CD4-positive, alpha-beta memory T cell (primary cell): ENCODE measurements at regions of chr19 and their contacts with region 1.

Region 1: GRCh38 chr19:1490311-1491113 is at the start of gene PCSK4:
- DNase-seq: peak; percentile 97 to 100 (median 98)
- H3K4me3 ChIP-seq: peak within 1 kb of the TSS; percentile 34 to 58
- H3K4me3 Mint-ChIP-seq: peak within 1 kb of the TSS; percentile 86 to 95 (median 90)
- H3K27ac ChIP-seq: peak within 1 kb of the TSS; percentile 51
- H3K27ac Mint-ChIP-seq: peak within 1 kb of the TSS; percentile 88 to 96 (median 93)
- H3K4me1 ChIP-seq: peaks cover 15% of the 10 kb centered on the region
- H3K4me1 Mint-ChIP-seq: peaks cover 3 to 18% (median 10%) of the 10 kb centered on the region in 4 donors
- H3K27me3 ChIP-seq: no peaks in the 10 kb centered on the region
- H3K27me3 Mint-ChIP-seq: peaks cover 0 to 3% of the 10 kb centered on the region in 2 donors
- total RNA-seq, gene PCSK4: 3.1 to 3.7 TPM

Region 2: DNA sequence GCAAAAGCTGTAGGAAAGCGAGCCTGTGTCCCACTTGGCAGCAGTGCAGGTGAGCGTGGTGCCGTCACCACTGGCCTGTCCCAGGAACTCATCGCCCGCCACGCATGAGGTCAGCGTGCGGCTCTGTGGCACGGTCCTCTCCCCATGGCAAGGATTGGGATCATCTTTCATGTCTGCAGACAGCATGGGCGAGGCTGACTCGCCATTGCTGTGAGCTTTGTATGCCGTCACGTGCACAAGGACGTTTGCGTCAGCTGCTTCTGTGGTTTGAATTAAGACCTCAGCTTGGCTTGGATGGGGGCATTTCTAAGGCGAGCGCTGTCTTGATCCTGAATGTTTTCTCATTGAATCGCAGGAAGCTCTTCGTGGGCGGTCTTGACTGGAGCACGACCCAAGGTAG is 73.4 kb before region 1 on chr19:
- CTCF ChIA-PET with region 1: no interaction called
- POLR2A ChIA-PET with region 1: no interaction called
- intact Hi-C with region 1: no loop called
- DNase-seq: no peak
- H3K4me3 ChIP-seq: no peak overlapping the region
- H3K4me3 Mint-ChIP-seq: no peak overlapping the region
- H3K27ac ChIP-seq: no peak overlapping the region
- H3K27ac Mint-ChIP-seq: peak overlapping the region in 3 of 7 donors; percentile 4 to 59 (median 51)
- H3K4me1 ChIP-seq: peaks cover 51% of the 10 kb centered on the region
- H3K4me1 Mint-ChIP-seq: peaks cover 23 to 54% (median 43%) of the 10 kb centered on the region in 4 donors
- H3K27me3 ChIP-seq: no peaks in the 10 kb centered on the region
- H3K27me3 Mint-ChIP-seq: no peaks in the 10 kb centered on the region

Region 3: GRCh38 chr19:1445185-1445931 is 45.2 kb before region 1 on chr19:
- CTCF ChIA-PET with region 1: interaction called, 3 read pairs
- POLR2A ChIA-PET with region 1: interaction called, 4 read pairs
- intact Hi-C with region 1: loop called (anchors 1 kb)
- DNase-seq: peak; percentile 68 to 82 (median 74)
- H3K4me3 ChIP-seq: peak overlapping the region in 1 of 2 donors; percentile 57
- H3K4me3 Mint-ChIP-seq: peak overlapping the region; percentile 53 to 82 (median 70)
- H3K27ac ChIP-seq: peak overlapping the region; percentile 22
- H3K27ac Mint-ChIP-seq: peak overlapping the region in 4 of 7 donors; percentile 25 to 99 (median 54)
- H3K4me1 ChIP-seq: peaks cover 40% of the 10 kb centered on the region
- H3K4me1 Mint-ChIP-seq: peaks cover 4 to 47% (median 16%) of the 10 kb centered on the region in 4 donors
- H3K27me3 ChIP-seq: peaks cover 27% of the 10 kb centered on the region
- H3K27me3 Mint-ChIP-seq: peaks cover 17 to 20% of the 10 kb centered on the region in 2 donors

Region 4: GRCh38 chr19:1470203-1471009 is 20.1 kb before region 1 on chr19:
- CTCF ChIA-PET with region 1: interaction called, 4 read pairs
- POLR2A ChIA-PET with region 1: interaction called, 12 read pairs
- intact Hi-C with region 1: no loop called
- DNase-seq: peak; percentile 66 to 80 (median 70)
- H3K4me3 ChIP-seq: peak overlapping the region; percentile 57 to 58
- H3K4me3 Mint-ChIP-seq: peak overlapping the region; percentile 67 to 83 (median 77)
- H3K27ac ChIP-seq: no peak overlapping the region
- H3K27ac Mint-ChIP-seq: peak overlapping the region in 1 of 7 donors; percentile 58
- H3K4me1 ChIP-seq: peaks cover 54% of the 10 kb centered on the region
- H3K4me1 Mint-ChIP-seq: peaks cover 3 to 21% (median 8%) of the 10 kb centered on the region in 4 donors
- H3K27me3 ChIP-seq: no peaks in the 10 kb centered on the region
- H3K27me3 Mint-ChIP-seq: peaks cover 0 to 1% of the 10 kb centered on the region in 2 donors

Region 5: GRCh38 chr19:1478934-1479707 is 11.4 kb before region 1 on chr19 and contains the start of gene C19orf25:
- CTCF ChIA-PET with region 1: interaction called, 4 read pairs
- POLR2A ChIA-PET with region 1: interaction called, 9 read pairs
- intact Hi-C with region 1: loop called (anchors 1 kb)
- DNase-seq: peak; percentile 87 to 91 (median 89)
- H3K4me3 ChIP-seq: peak within 1 kb of the TSS; percentile 46 to 52
- H3K4me3 Mint-ChIP-seq: peak within 1 kb of the TSS; percentile 97 to 100 (median 98)
- H3K27ac ChIP-seq: peak within 1 kb of the TSS; percentile 76
- H3K27ac Mint-ChIP-seq: peak within 1 kb of the TSS; percentile 87 to 99 (median 97)
- H3K4me1 ChIP-seq: peaks cover 14% of the 10 kb centered on the region
- H3K4me1 Mint-ChIP-seq: peaks cover 6 to 32% (median 14%) of the 10 kb centered on the region in 4 donors
- H3K27me3 ChIP-seq: no peaks in the 10 kb centered on the region
- H3K27me3 Mint-ChIP-seq: no peaks in the 10 kb centered on the region
- total RNA-seq, gene C19orf25: 68.8 to 79.8 TPM

Region 6: GRCh38 chr19:1507763-1508509 is 17.4 kb after region 1 on chr19:
- CTCF ChIA-PET with region 1: interaction called, 4 read pairs
- POLR2A ChIA-PET with region 1: interaction called, 4 read pairs
- intact Hi-C with region 1: loop called (anchors 1 kb)
- DNase-seq: peak; percentile 91 to 95 (median 94)
- H3K4me3 ChIP-seq: peak overlapping the region in 1 of 2 donors; percentile 15
- H3K4me3 Mint-ChIP-seq: peak overlapping the region; percentile 71 to 89 (median 84)
- H3K27ac ChIP-seq: peak overlapping the region; percentile 50
- H3K27ac Mint-ChIP-seq: peak overlapping the region; percentile 90 to 98 (median 92)
- H3K4me1 ChIP-seq: peaks cover 32% of the 10 kb centered on the region
- H3K4me1 Mint-ChIP-seq: peaks cover 10 to 32% (median 15%) of the 10 kb centered on the region in 4 donors
- H3K27me3 ChIP-seq: no peaks in the 10 kb centered on the region
- H3K27me3 Mint-ChIP-seq: peaks cover 1 to 19% of the 10 kb centered on the region in 2 donors

Region 7: GRCh38 chr19:1632462-1633268 is 142.2 kb after region 1 on chr19:
- CTCF ChIA-PET with region 1: no interaction called
- POLR2A ChIA-PET with region 1: no interaction called
- intact Hi-C with region 1: no loop called
- DNase-seq: no peak
- H3K4me3 ChIP-seq: no peak overlapping the region
- H3K4me3 Mint-ChIP-seq: no peak overlapping the region
- H3K27ac ChIP-seq: no peak overlapping the region
- H3K27ac Mint-ChIP-seq: no peak overlapping the region
- H3K4me1 ChIP-seq: no peaks in the 10 kb centered on the region
- H3K4me1 Mint-ChIP-seq: peaks cover 0 to 2% (median 0%) of the 10 kb centered on the region in 4 donors
- H3K27me3 ChIP-seq: no peaks in the 10 kb centered on the region
- H3K27me3 Mint-ChIP-seq: no peaks in the 10 kb centered on the region

Region 8: DNA sequence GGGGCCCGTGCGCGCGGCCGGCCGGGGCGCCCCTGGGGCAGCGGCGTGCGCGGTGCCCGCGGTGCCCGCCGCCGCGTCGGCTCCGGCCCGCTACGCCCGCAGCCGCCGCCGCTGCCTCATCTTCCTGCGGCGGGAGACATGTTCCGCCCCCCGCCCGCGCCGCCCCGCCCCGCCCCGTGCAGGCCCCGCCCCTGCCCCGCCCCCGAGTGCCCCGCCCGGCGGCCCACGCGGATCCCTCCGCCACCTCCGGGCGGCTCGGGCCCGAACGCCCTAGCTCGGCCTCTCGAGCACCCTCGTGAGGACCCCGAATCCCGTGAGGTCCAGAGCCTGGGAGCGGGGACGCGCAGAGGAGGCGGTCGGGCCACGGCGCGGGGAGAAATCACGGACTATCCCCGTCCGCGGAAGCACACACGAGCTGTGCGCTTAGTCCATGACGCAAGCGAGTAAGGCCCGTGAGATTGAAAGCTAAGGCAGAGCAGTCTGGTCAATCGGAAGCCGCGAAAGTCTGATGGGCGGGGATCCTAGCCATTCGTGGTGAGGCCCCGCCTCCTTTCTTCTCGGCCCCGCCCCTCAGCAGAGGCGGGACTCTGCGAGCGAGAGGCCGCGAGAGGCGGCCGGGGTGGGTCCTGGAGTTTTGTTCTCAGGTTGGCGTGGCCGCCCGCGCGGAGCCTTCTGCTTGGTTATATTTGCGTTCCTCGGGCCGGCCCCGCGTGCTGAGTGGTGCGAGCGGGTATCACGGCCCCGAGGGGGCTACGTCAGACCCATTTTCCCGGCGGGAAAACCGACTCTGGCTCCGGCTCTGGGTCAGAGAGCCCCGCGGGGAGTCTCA is 162.2 kb after region 1 on chr19 and contains the start of gene TCF3:
- CTCF ChIA-PET with region 1: no interaction called
- POLR2A ChIA-PET with region 1: interaction called, 5 read pairs
- intact Hi-C with region 1: loop called (anchors 2 kb)
- DNase-seq: peak; percentile 98 to 100 (median 100)
- H3K4me3 ChIP-seq: peak within 1 kb of the TSS; percentile 36 to 84
- H3K4me3 Mint-ChIP-seq: peak within 1 kb of the TSS; percentile 84 to 95 (median 89)
- H3K27ac ChIP-seq: peak within 1 kb of the TSS; percentile 99
- H3K27ac Mint-ChIP-seq: peak within 1 kb of the TSS; percentile 94 to 99 (median 96)
- H3K4me1 ChIP-seq: peaks cover 17% of the 10 kb centered on the region
- H3K4me1 Mint-ChIP-seq: peaks cover 5 to 22% (median 13%) of the 10 kb centered on the region in 4 donors
- H3K27me3 ChIP-seq: no peaks in the 10 kb centered on the region
- H3K27me3 Mint-ChIP-seq: peaks cover 1 to 6% of the 10 kb centered on the region in 2 donors
- total RNA-seq, gene TCF3: 72.0 to 75.7 TPM